Psoas muscle (tissue), 8 donors: ENCODE measurements at regions of chr1 and their contacts with region 1.

Region 1: GRCh38 chr1:75991497-75992114 is 59.4 kb upstream of the ASB17 start:
- DNase-seq: peak; percentile 82 to 91
- ATAC-seq: peak; percentile 37 to 80 (median 66)
- H3K4me3 ChIP-seq: no peak overlapping the region
- H3K27ac ChIP-seq: no peak overlapping the region
- H3K4me1 ChIP-seq: no peaks in the 10 kb centered on the region
- H3K27me3 ChIP-seq: peaks cover 0 to 5% (median 0%) of the 10 kb centered on the region in 3 donors
- CTCF ChIP-seq: peak; percentile 76

Region 2: DNA sequence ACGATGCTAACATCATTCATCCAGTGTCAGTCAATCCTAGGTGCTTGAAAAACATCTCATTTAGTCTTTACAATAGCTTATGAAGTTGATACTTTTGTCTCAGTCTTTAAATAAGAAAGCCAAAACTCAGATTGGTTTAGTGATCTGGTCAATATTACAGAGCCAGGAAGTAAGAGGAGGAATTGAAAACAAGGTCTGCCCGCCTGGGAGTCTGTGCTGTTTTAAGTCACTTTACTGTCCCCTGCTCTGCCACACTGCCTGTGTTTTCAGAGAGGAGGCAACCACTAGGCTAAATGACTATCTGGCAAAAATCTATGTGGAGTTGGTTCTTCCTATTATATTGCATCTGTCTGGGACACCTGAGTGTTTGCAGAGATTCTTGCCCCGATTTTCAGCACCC is 145.3 kb after region 1 on chr1:
- intact Hi-C with region 1: loop called in 1 of 2 experiments (anchors 5 kb)
- DNase-seq: no peak
- ATAC-seq: no peak
- H3K4me3 ChIP-seq: no peak overlapping the region
- H3K27ac ChIP-seq: no peak overlapping the region
- H3K4me1 ChIP-seq: no peaks in the 10 kb centered on the region
- H3K27me3 ChIP-seq: no peaks in the 10 kb centered on the region
- CTCF ChIP-seq: no peak

Region 3: GRCh38 chr1:76330991-76331603 is 339.5 kb after region 1 on chr1:
- intact Hi-C with region 1: loop called in 1 of 2 experiments (anchors 10 kb)
- DNase-seq: no peak
- ATAC-seq: peak in 1 of 4 donors; percentile 58
- H3K4me3 ChIP-seq: no peak overlapping the region
- H3K27ac ChIP-seq: no peak overlapping the region
- H3K4me1 ChIP-seq: peaks cover 3% of the 10 kb centered on the region
- H3K27me3 ChIP-seq: no peaks in the 10 kb centered on the region
- CTCF ChIP-seq: peak; percentile 78